Breast epithelium (tissue), 4 donors: ENCODE measurements at regions of chr6 and their contacts with region 1.

Region 1: GRCh38 chr6:13914351-13914750 is 10.4 kb upstream of the RNF182 start:
- DNase-seq: no peak
- H3K4me3 ChIP-seq: no peak overlapping the region
- H3K27ac ChIP-seq: no peak overlapping the region
- H3K4me1 ChIP-seq: no peaks in the 10 kb centered on the region
- H3K27me3 ChIP-seq: no peaks in the 10 kb centered on the region
- CTCF ChIP-seq: no peak
- POLR2A ChIP-seq: no peak

Region 2: DNA sequence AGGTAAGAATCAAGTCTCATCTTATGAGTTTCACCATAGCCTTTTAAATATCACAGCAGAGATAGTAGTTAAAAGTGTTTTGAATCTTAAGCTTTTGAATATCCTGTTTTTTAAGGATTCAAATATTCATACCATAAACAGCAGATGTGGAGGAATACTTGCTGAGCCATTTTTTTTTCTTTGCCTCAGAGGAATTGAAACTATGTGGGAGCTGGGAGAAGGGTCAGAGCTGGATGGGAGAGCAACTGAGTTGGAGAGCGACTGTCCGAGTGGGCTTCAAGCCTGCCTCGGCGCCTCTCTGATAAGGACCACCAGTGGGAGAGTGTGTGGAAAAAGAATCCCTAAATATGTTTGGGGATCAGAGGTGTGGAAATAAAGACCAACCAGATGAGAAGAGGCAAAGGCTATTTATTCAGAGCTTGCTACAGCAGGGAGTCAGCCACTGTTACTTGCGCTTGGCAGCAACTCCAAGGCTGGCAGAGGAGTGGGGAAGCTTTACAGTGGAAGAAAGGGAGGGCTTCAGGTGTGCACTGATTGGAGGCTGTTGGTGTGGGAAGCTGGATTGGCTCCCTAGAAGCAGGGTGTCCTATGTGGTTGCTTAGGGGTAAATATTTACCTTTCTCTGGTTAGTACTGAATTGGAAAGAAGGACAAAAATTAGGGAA is 65.7 kb before region 1 on chr6:
- intact Hi-C with region 1: no loop called
- DNase-seq: no peak
- H3K4me3 ChIP-seq: peak overlapping the region in 2 of 3 donors; percentile 20 to 34
- H3K27ac ChIP-seq: peak overlapping the region; percentile 55 to 70
- H3K4me1 ChIP-seq: no peaks in the 10 kb centered on the region
- H3K27me3 ChIP-seq: no peaks in the 10 kb centered on the region
- CTCF ChIP-seq: no peak
- POLR2A ChIP-seq: no peak

Region 3: GRCh38 chr6:13935190-13935880 is 21.0 kb after region 1 on chr6:
- intact Hi-C with region 1: loop called (anchors 2 kb)
- DNase-seq: no peak
- H3K4me3 ChIP-seq: no peak overlapping the region
- H3K27ac ChIP-seq: no peak overlapping the region
- H3K4me1 ChIP-seq: no peaks in the 10 kb centered on the region
- H3K27me3 ChIP-seq: no peaks in the 10 kb centered on the region
- CTCF ChIP-seq: no peak
- POLR2A ChIP-seq: no peak

Region 4: DNA sequence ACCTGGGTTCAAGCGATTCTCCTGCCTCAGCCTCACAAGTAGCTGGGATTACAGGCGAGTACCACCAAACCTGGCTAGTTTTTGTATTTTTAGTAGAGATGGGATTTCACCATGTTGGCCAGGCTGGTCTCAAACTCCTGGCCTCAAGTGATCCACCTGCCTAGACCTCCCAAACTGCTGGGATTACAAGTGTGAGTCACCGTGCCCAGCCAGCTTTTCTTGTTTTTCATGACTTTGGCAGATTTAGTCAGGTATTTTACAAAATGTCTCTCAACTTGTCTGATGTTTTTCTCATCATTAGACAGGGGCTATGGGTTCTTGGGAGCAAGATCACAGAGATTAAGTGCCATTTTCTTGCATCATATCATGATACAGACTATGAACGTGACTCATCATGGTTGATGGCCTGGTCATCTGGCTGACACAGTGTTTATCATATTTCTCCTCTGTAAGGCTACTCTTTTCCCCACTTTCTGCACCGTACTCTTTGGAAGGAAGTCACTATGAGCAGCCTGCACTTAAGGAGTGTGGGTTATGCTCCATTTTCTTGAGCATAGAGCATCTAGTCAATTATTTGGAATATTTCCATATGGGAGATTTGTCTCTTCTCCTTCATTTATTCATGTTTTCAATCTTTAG is 78.2 kb after region 1 on chr6:
- intact Hi-C with region 1: no loop called
- DNase-seq: no peak
- H3K4me3 ChIP-seq: no peak overlapping the region
- H3K27ac ChIP-seq: no peak overlapping the region
- H3K4me1 ChIP-seq: no peaks in the 10 kb centered on the region
- H3K27me3 ChIP-seq: no peaks in the 10 kb centered on the region
- CTCF ChIP-seq: no peak
- POLR2A ChIP-seq: no peak

Region 5: DNA sequence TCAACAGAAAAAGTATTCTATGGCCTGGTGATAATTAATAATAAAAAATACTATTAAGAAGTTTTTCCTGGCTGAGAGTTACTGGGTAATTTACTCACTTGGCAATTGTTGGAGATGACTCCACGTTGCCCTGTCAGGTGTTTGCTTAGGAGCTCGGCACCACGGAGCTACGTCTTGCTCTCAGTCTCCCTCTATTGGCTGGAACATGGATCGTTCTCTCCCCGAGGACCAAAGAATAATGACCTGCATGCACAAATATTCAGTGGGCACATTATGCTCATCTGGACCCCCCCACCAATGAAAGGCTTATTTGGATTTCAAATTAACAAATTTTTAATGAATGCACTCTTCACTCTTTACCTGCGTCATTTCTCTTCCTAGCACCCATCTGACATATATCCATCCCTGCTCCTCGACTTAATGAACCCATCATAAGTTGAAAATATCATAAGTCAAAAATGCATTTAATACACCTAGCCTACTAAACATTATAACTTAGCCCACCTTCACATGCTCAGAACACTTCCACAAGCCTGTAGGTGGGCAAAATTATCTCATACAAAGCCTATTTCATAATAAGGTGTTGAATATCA is 132.2 kb after region 1 on chr6:
- intact Hi-C with region 1: loop called (anchors 5 kb)
- DNase-seq: no peak
- H3K4me3 ChIP-seq: no peak overlapping the region
- H3K27ac ChIP-seq: no peak overlapping the region
- H3K4me1 ChIP-seq: no peaks in the 10 kb centered on the region
- H3K27me3 ChIP-seq: no peaks in the 10 kb centered on the region
- CTCF ChIP-seq: peak in 2 of 3 donors; percentile 51 to 56
- POLR2A ChIP-seq: no peak